HepG2 (cell line): ENCODE measurements at regions of chr18 and their contacts with region 1.

Region 1: DNA sequence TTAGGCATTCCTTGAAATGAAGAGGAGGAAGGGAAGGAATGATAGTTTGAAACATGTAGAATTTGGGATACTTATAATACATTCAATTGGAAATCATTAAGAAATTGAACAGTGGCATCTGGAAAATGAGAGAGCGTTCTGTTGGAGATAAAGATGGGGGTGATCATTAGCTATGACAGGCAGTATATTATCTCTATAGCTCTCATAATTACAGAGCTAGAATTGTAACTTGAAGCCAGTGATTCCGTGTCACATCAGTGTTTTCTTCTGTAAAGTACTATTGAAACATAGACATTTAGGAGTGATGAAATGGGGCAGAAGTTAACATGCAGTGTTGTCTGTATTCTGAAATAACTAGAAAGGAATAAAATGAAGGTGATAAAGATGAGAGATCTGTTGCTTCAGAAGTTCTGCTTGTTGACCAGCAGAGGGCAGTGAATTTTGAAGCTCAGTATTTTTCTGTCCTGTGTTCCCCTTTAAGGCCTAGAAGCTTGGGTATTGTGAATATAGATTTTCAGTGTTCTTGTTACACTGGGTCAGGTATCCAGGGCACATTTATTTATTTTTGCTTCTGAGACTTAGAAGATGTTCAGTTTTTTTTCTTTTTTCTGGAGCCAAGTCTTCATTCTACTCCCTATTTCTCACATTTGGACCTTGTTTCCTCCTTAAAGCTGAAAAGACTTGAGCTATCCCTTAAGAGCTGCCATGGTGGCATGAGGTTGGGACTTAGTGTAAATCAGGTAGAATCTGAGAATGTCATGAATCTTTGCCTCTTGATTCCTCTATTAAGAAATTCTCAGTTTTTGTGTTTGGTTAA is 157.4 kb downstream of the TAF4B start:
- DNase-seq: peak; percentile 35
- ATAC-seq: peak; percentile 75
- H3K4me3 ChIP-seq: no peak overlapping the region
- H3K27ac ChIP-seq: no peak overlapping the region
- H3K4me1 ChIP-seq: peaks cover 15% of the 10 kb centered on the region
- H3K27me3 ChIP-seq: no peaks in the 10 kb centered on the region
- CTCF ChIP-seq: peak; percentile 63
- EP300 ChIP-seq: no peak
- POLR2A ChIP-seq: no peak
- RAD21 ChIP-seq: peak; percentile 31; the same call in 1 of the 2 replicates

Region 2: DNA sequence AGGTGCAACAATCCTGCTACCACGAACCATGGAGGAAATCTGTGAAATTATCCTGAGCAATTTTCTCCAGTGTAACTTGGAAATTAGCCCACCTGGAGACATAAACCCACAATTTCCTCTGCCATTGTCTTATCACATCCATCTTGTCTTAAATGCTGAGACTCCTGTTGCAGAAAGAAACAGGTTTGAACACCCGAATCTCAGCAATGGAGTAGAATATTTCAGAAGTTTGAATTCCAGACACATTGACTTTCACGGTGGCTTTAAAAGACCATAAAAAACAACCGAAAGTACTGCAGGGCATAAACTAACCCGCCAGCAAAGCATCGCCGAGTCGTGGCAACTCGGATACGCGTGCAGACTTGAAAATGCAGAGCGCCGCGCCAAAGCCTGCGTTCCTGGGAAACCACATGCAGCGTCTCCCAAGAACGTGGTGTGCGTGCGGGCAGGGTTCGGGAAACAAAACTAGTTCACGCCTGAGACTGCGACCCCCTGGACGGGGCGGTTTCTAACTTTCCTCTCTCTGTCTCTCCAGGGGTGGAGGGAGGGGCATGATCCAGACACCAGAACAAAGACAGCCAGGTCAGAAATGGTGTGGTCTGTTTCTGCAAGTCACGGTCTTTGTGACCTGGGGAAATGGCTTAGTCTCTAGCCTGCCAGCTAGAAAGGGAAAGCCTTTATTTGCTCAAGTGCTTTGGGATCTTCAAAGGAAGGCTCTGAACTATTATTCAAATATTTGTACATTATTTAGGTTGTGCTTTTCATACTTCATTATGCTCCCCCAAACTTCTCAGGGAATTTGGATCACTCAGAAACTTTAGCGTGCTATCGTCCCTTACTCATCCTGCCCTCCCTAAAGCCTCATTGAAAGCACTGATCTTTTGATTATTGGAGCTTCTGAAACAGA is 191.5 kb after region 1 on chr18:
- CTCF ChIA-PET with region 1: no interaction called
- POLR2A ChIA-PET with region 1: no interaction called
- in situ Hi-C with region 1: no loop called
- intact Hi-C with region 1: loop called (anchors 5 kb)
- DNase-seq: peak; percentile 52
- ATAC-seq: peak; percentile 90
- H3K4me3 ChIP-seq: peak overlapping the region; percentile 13 to 50 (median 38)
- H3K27ac ChIP-seq: no peak overlapping the region
- H3K4me1 ChIP-seq: peaks cover 21% of the 10 kb centered on the region
- H3K27me3 ChIP-seq: peaks cover 0 to 11% of the 10 kb centered on the region in 2 experiments; a peak in 1 of 5 replicates
- CTCF ChIP-seq: no peak
- EP300 ChIP-seq: peak in 1 of 2 experiments; percentile 29; a peak in 1 of 4 replicates
- POLR2A ChIP-seq: no peak
- RAD21 ChIP-seq: no peak